GM12878 (cell line): ENCODE measurements at regions of chr12 and their contacts with region 1.

Region 1: DNA sequence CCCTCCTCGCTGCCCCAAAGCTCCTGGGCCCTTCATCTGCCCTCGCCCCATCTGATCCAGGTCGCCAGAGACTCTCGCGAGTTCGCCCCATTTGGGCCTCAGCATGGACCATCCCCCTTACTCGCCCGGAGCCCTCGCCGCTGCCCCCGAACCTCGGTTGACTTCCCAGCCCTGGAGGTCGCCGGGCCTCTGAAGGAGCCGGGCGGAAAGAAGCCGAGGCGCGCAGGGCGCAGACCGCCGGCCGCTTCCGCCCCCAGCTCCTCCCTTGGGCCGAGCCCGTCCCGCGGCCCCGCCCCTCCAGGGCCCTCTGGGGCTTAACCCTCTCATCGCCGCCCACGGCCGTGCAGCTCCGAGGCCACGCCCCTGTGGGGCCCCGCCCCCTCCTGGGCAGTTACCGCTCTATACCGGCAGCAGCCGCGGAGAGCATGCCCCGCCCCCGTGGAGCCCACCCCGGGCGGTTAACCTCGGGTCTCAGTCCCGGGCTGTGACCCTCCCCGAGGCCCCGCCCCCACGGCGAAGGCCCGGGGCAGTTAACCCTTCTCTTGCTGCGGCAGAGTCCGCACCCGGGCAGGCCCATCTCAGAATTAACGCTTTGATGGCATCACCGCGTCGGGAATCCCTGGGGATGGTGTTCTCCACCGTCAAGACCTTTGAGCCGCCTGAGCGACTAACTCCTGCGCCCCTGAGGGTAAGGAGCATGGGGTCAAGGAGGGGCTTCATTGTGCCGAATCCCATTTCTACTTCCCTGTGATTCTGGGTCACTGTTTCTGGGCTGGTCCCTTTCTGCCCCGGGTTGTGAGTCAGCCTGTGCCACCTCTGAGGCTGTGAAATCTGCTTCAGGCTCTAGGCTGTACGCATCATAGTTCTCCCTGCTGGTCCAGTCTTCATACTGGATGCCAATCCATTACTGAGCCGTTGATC is at the start of gene SPSB2:
- DNase-seq: peak; percentile 69
- ATAC-seq: peak; percentile 91
- H3K4me3 ChIP-seq: peak within 1 kb of the TSS; percentile 87
- H3K27ac ChIP-seq: peak within 1 kb of the TSS; percentile 59
- H3K4me1 ChIP-seq: peaks cover 30% of the 10 kb centered on the region
- H3K27me3 ChIP-seq: no peaks in the 10 kb centered on the region
- CTCF ChIP-seq: no peak
- EP300 ChIP-seq: no peak
- POLR2A ChIP-seq: peak; percentile 77
- RAD21 ChIP-seq: no peak
- polyA plus RNA-seq, gene SPSB2: 0.08 to 0.24 TPM

Region 2: GRCh38 chr12:6851921-6852650 is 21.3 kb before region 1 on chr12 and contains the start of gene USP5:
- CTCF ChIA-PET with region 1: interaction called, 173 read pairs
- POLR2A ChIA-PET with region 1: interaction called, 84 read pairs
- RAD21 ChIA-PET with region 1: interaction called, 42 read pairs
- SMC1A ChIA-PET with region 1: interaction called, 42 read pairs
- in situ Hi-C with region 1: no loop called
- intact Hi-C with region 1: no loop called
- DNase-seq: peak; percentile 99
- ATAC-seq: peak; percentile 87
- H3K4me3 ChIP-seq: peak within 1 kb of the TSS; percentile 82
- H3K27ac ChIP-seq: peak within 1 kb of the TSS; percentile 84
- H3K4me1 ChIP-seq: peaks cover 28% of the 10 kb centered on the region
- H3K27me3 ChIP-seq: no peaks in the 10 kb centered on the region
- CTCF ChIP-seq: no peak
- EP300 ChIP-seq: no peak
- POLR2A ChIP-seq: peak; percentile 89
- RAD21 ChIP-seq: no peak
- polyA plus RNA-seq, gene USP5: 2.5 to 5.2 TPM

Region 3: GRCh38 chr12:6890789-6891645 is 17.7 kb after region 1 on chr12:
- CTCF ChIA-PET with region 1: interaction called, 121 read pairs
- POLR2A ChIA-PET with region 1: interaction called, 30 read pairs
- RAD21 ChIA-PET with region 1: interaction called, 37 read pairs
- SMC1A ChIA-PET with region 1: interaction called, 41 read pairs
- in situ Hi-C with region 1: no loop called
- intact Hi-C with region 1: loop called (anchors 1 kb)
- DNase-seq: peak; percentile 86
- ATAC-seq: peak; percentile 98
- H3K4me3 ChIP-seq: peak overlapping the region; percentile 64
- H3K27ac ChIP-seq: peak overlapping the region; percentile 97
- H3K4me1 ChIP-seq: peaks cover 12% of the 10 kb centered on the region
- H3K27me3 ChIP-seq: no peaks in the 10 kb centered on the region
- CTCF ChIP-seq: peak; percentile 71 to 96 (median 80); a peak in 5 of 6 replicates
- EP300 ChIP-seq: 0 out of 4 replicates have a peak, but pooled peaks of 1 of the 2 experiments have one; percentile 8
- POLR2A ChIP-seq: peak; percentile 72
- RAD21 ChIP-seq: 0 out of 2 replicates have a peak, but pooled peaks have one; percentile 26

Region 4: DNA sequence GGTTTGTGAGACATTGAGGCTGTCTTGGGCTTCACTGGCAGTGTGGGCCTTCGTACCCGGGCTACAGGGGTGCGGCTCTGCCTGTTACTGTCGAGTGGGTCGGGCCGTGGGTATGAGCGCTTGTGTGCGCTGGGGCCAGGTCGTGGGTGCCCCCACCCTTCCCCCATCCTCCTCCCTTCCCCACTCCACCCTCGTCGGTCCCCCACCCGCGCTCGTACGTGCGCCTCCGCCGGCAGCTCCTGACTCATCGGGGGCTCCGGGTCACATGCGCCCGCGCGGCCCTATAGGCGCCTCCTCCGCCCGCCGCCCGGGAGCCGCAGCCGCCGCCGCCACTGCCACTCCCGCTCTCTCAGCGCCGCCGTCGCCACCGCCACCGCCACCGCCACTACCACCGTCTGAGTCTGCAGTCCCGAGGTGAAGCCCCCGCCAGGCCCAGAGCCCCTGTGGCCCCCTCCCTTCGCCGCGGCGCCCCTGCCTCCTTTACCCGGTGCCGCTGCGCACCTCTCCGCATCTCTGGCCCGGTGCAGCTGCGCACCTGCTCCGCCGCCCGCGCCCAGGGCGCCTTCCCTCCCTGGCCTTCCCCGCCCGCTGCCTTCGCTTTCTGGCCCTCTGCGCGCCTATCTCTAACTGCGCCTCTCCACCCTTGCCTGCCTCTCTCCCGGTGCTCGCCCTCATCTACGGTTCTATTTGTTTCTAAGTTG is 41.0 kb after region 1 on chr12 and contains the start of gene ENO2:
- CTCF ChIA-PET with region 1: interaction called, 18 read pairs
- POLR2A ChIA-PET with region 1: interaction called, 8 read pairs
- RAD21 ChIA-PET with region 1: interaction called, 3 read pairs
- SMC1A ChIA-PET with region 1: no interaction called
- in situ Hi-C with region 1: no loop called
- intact Hi-C with region 1: no loop called
- DNase-seq: no peak
- ATAC-seq: peak; percentile 92
- H3K4me3 ChIP-seq: peak within 1 kb of the TSS; percentile 100
- H3K27ac ChIP-seq: peak within 1 kb of the TSS; percentile 59
- H3K4me1 ChIP-seq: peaks cover 8% of the 10 kb centered on the region; the same call in 1 of the 2 replicates
- H3K27me3 ChIP-seq: no peaks in the 10 kb centered on the region
- CTCF ChIP-seq: no peak
- EP300 ChIP-seq: no peak
- POLR2A ChIP-seq: peak; percentile 59
- RAD21 ChIP-seq: no peak
- polyA plus RNA-seq, gene ENO2: 37.3 to 42.1 TPM

Region 5: DNA sequence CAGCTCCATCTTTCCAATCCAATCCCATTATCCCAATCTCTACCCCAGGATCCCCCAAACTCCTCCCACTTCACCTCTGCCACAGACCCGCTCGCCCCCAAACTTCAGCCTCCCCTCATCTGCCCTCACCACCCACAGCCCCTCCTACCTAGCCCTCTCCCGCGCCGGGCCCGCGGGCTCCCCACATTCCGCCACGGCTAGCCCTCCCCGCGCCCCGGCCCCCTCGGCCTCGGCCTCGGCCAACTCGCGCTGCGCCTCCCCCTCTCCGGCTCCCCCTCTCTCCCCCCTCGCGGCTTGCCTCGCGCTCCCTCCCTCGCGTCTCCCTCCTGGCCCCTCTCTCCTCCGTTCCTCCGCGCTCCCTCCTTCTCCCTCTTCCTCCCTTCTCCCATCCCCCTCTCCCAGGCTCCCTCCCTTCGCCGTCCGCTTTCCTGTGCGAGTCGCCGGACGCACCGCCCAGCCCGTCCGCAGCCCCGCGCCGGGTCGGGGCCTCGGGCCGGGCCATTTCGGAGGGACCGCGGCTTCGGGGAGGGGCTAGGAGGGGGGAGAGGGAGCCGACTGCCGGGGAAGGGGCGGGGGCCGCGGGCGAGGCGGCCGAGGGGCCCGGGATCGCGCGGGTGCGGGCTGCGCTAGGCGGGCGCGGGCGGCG is 54.1 kb after region 1 on chr12 and contains the start of gene ATN1:
- CTCF ChIA-PET with region 1: interaction called, 22 read pairs
- POLR2A ChIA-PET with region 1: interaction called, 6 read pairs
- RAD21 ChIA-PET with region 1: interaction called, 4 read pairs
- SMC1A ChIA-PET with region 1: interaction called, 6 read pairs
- in situ Hi-C with region 1: no loop called
- intact Hi-C with region 1: loop called (anchors 2 kb)
- DNase-seq: no peak
- ATAC-seq: peak; percentile 43
- H3K4me3 ChIP-seq: peak within 1 kb of the TSS; percentile 95
- H3K27ac ChIP-seq: peak within 1 kb of the TSS; percentile 86
- H3K4me1 ChIP-seq: peaks cover 37% of the 10 kb centered on the region
- H3K27me3 ChIP-seq: no peaks in the 10 kb centered on the region
- CTCF ChIP-seq: no peak
- EP300 ChIP-seq: no peak
- POLR2A ChIP-seq: peak; percentile 79
- RAD21 ChIP-seq: no peak
- polyA plus RNA-seq, gene ATN1: 0.08 to 0.15 TPM

Region 6: GRCh38 chr12:6944381-6945186 is 71.2 kb after region 1 on chr12:
- CTCF ChIA-PET with region 1: interaction called, 26 read pairs
- POLR2A ChIA-PET with region 1: interaction called, 22 read pairs
- RAD21 ChIA-PET with region 1: interaction called, 20 read pairs
- SMC1A ChIA-PET with region 1: interaction called, 5 read pairs
- in situ Hi-C with region 1: no loop called
- intact Hi-C with region 1: no loop called
- DNase-seq: peak; percentile 85
- ATAC-seq: peak; percentile 69
- H3K4me3 ChIP-seq: peak overlapping the region; percentile 78
- H3K27ac ChIP-seq: peak overlapping the region; percentile 91
- H3K4me1 ChIP-seq: peaks cover 36% of the 10 kb centered on the region
- H3K27me3 ChIP-seq: no peaks in the 10 kb centered on the region
- CTCF ChIP-seq: peak; percentile 85 to 99 (median 95); a peak in 5 of 6 replicates
- EP300 ChIP-seq: no peak
- POLR2A ChIP-seq: peak; percentile 87
- RAD21 ChIP-seq: peak; percentile 86